A673 (cell line): ENCODE measurements at regions of chr3 and their contacts with region 1.

Region 1: GRCh38 chr3:195187609-195188425 is 83.1 kb downstream of the XXYLT1 start:
- DNase-seq: peak; percentile 54
- H3K4me3 ChIP-seq: no peak overlapping the region
- H3K27ac ChIP-seq: peak overlapping the region; percentile 83
- H3K4me1 ChIP-seq: peaks cover 67% of the 10 kb centered on the region
- H3K27me3 ChIP-seq: no peaks in the 10 kb centered on the region
- CTCF ChIP-seq: no peak

Region 2: DNA sequence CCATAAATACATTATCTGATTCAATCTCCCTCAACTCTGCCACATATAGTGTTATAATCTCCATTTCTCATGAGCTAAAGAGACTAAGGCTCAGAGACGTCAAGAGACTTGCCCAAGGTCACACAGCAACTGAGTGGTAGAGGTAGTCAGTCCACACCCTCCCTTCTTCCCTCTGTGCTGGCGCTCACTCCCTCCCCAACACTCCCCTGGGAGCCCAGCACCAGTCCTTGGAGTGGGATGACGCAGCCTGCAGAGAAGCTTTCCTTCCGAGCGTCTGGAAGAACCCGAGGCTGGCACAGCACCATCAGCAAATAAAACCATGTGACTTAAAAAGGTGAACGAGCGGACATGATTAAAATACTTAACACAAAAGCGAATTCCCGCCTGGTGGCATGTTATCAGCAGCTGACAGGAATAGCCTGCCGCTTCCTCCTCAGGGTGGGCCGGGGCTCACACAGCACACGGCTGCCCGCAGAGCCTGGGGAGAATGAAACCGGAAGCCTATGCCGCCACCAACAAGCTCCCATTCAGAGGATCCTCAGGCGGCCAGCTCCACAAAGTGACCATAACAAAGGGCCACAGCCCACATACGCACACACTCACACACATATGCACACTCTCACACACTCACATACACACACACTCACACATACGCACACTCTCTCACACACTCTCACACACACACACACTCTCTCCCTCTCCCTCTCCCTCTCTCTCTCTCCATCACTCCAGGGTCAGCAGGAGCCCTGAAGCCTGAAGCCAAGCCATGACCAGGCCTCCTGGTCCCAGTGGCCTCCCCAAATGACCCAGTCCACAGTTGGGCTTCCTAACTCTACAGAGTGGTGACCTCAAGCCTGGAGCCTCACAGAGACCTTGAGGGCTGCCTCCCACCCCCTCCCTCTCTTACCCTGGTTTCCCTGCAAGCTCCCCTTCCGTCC is 37.4 kb before region 1 on chr3:
- CTCF ChIA-PET with region 1: no interaction called
- POLR2A ChIA-PET with region 1: no interaction called
- intact Hi-C with region 1: loop called (anchors 2 kb)
- DNase-seq: peak; percentile 97
- H3K4me3 ChIP-seq: peak overlapping the region; percentile 18
- H3K27ac ChIP-seq: peak overlapping the region; percentile 86
- H3K4me1 ChIP-seq: peaks cover 75% of the 10 kb centered on the region
- H3K27me3 ChIP-seq: no peaks in the 10 kb centered on the region
- CTCF ChIP-seq: no peak